ENCODE measurements at regions of chr3 and their contacts with region 1.

Region 1: GRCh38 chr3:120596116-120596852 is at the start of gene NDUFB4:
- DNase-seq: peak; percentile 92
- H3K4me3 Mint-ChIP-seq: peak within 1 kb of the TSS; percentile 79
- H3K27ac Mint-ChIP-seq: peak within 1 kb of the TSS; percentile 80
- H3K4me1 Mint-ChIP-seq: no peaks in the 10 kb centered on the region
- H3K27me3 Mint-ChIP-seq: no peaks in the 10 kb centered on the region
- CTCF ChIP-seq: no peak
- total RNA-seq, gene NDUFB4: 118 and 138 TPM in 2 replicates

Region 2: DNA sequence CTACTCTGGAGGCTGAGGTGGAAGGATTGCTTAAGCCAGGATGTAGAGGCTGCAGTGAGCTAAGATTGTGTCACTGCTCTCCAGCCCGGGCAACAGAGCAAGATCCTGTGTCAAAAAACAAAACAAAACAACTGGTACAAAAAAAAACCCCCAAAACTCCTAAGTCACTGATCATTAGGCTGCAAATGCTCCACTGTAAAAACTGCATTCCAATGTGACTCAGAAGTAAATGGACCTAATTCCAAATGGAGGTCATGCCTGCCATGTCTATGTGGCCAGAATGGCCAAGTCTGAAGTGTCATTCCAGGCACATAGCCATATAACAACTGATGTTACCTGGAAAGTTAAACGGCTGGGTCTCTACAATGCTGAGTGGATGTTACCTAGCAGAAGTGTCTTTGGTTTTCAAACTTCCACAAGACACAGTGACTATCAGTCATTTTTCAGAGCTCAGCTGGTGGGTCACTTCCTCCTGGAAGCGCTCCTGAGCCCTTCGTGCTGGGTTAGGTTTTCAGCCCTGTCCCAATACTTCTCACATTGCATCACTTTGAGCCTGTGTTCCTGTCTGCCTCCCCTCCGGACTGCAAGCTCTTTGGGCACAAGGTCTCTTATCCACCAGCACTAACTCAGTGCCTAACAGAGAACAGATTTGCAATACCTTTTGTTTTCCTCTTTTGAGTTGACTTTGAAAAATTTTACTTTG is 156.1 kb before region 1 on chr3:
- CTCF ChIA-PET with region 1: no interaction called
- intact Hi-C with region 1: no loop called
- DNase-seq: no peak
- H3K4me3 Mint-ChIP-seq: no peak overlapping the region
- H3K27ac Mint-ChIP-seq: no peak overlapping the region
- H3K4me1 Mint-ChIP-seq: peaks cover 17% of the 10 kb centered on the region
- H3K27me3 Mint-ChIP-seq: no peaks in the 10 kb centered on the region
- CTCF ChIP-seq: no peak

Region 3: DNA sequence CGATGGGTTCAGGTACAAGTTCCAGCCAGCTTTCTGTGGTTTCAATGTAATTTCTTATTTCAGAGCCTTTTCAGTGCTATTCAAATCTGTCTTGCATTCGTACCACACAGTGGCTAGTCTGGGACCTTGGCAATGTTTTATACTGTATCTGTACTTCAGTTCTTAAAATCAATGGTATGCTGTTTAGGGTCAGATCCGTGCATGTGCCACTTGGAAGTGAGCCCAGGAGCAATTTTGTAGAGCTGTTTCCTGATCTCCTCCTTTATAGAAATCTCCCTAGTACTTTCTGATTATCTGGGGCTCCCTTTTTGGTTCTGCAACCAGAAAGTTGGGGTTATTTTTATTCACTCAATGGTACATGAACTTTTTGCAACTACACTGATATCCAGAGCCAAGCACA is 59.6 kb before region 1 on chr3:
- CTCF ChIA-PET with region 1: no interaction called
- intact Hi-C with region 1: no loop called
- DNase-seq: no peak
- H3K4me3 Mint-ChIP-seq: no peak overlapping the region
- H3K27ac Mint-ChIP-seq: no peak overlapping the region
- H3K4me1 Mint-ChIP-seq: no peaks in the 10 kb centered on the region
- H3K27me3 Mint-ChIP-seq: no peaks in the 10 kb centered on the region
- CTCF ChIP-seq: no peak

Region 4: GRCh38 chr3:120742198-120742849 is 146.0 kb after region 1 on chr3 and contains the starts of genes GTF2E1 and RABL3:
- CTCF ChIA-PET with region 1: interaction called, 4 read pairs
- intact Hi-C with region 1: loop called (anchors 1 kb)
- DNase-seq: peak; percentile 95
- H3K4me3 Mint-ChIP-seq: peak within 1 kb of the TSS; percentile 77
- H3K27ac Mint-ChIP-seq: peak within 1 kb of the TSS; percentile 75
- H3K4me1 Mint-ChIP-seq: peaks cover 20% of the 10 kb centered on the region
- H3K27me3 Mint-ChIP-seq: no peaks in the 10 kb centered on the region
- CTCF ChIP-seq: no peak
- total RNA-seq, gene GTF2E1: 22.9 and 26.1 TPM in 2 replicates
- total RNA-seq, gene RABL3: 14.6 and 16.9 TPM in 2 replicates

Region 5: DNA sequence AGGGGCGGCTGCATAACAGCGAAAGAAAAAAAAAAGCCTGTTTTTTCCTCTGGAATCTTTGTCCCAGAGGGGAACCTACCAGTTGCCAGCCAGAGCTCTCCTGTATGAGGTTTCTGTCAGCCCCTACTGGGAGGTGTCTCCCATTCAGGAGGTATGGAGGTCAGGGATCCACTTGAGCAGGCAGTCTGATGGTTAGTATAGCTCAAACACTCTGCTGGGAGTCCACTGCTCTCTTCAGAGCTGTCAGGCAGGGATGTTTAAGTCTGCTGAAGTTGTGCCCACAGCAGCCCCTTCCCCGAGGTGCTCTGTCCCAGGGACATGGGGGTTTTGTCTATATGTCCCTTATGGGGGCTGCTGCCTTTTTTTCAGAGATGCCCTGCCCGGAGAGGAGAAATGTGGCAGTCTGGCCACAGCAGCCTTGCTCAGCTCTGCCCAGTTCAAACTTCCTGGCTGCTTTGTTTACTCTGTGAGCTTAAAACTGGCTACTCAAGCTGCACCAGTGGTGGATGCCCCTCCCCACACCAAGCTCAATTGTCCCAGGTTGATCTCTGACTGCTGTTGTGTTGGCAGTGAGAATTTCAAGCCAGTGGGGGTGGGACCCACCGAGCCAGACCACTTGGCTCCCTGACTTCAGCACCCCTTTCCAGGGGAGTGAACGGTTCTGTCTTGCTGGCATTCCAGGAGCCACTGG is 500.5 kb after region 1 on chr3:
- CTCF ChIA-PET with region 1: no interaction called
- intact Hi-C with region 1: no loop called
- DNase-seq: no peak
- H3K4me3 Mint-ChIP-seq: no peak overlapping the region
- H3K27ac Mint-ChIP-seq: no peak overlapping the region
- H3K4me1 Mint-ChIP-seq: no peaks in the 10 kb centered on the region
- H3K27me3 Mint-ChIP-seq: no peaks in the 10 kb centered on the region
- CTCF ChIP-seq: no peak